Dorsolateral prefrontal cortex (tissue), 120 donors: ENCODE measurements at regions of chr2 and their contacts with region 1.

Region 1: GRCh38 chr2:28958689-28959088 is 22.4 kb upstream of the TOGARAM2 start:
- DNase-seq: peak; percentile 36 to 82 (median 72)
- H3K4me3 ChIP-seq: peak overlapping the region in 49 of 59 donors; percentile 4 to 56 (median 35)
- H3K27ac ChIP-seq: peak overlapping the region in 2 of 59 donors; percentile 5 to 48
- H3K27me3 ChIP-seq: no peaks in the 10 kb centered on the region
- CTCF ChIP-seq: peak; percentile 62 to 90 (median 83)

Region 2: DNA sequence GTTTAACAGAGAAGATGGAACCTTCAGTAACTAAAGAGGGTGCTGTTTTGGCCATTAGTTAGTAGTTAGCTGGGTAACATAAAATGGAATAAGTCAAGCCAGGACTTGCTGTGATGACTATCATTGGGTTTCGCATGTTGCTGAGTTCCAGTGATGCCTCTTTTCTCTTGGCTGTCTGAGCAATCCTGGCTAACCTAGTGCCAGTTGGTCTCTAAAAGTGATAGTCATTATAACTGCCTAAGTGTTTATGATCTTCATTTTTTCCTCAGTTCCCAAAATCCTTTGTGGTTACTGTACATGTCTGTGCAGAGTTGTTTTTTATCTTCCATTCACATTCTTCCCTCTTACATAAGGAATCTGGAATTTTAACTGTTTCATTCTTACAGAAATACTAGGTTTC is 30.8 kb before region 1 on chr2:
- intact Hi-C with region 1: no loop called
- DNase-seq: no peak
- H3K4me3 ChIP-seq: no peak overlapping the region
- H3K27ac ChIP-seq: no peak overlapping the region
- H3K27me3 ChIP-seq: no peaks in the 10 kb centered on the region
- CTCF ChIP-seq: no peak

Region 3: GRCh38 chr2:29075894-29076705 is 117.4 kb after region 1 on chr2:
- intact Hi-C with region 1: loop called in 1 of 2 experiments (anchors 5 kb)
- DNase-seq: peak in 9 of 10 donors; percentile 55 to 91 (median 79)
- H3K4me3 ChIP-seq: peak overlapping the region in 39 of 59 donors; percentile 0 to 54 (median 22)
- H3K27ac ChIP-seq: peak overlapping the region; percentile 68 to 99 (median 91)
- H3K27me3 ChIP-seq: no peaks in the 10 kb centered on the region
- CTCF ChIP-seq: peak in 19 of 56 donors; percentile 7 to 39 (median 24)

Region 4: DNA sequence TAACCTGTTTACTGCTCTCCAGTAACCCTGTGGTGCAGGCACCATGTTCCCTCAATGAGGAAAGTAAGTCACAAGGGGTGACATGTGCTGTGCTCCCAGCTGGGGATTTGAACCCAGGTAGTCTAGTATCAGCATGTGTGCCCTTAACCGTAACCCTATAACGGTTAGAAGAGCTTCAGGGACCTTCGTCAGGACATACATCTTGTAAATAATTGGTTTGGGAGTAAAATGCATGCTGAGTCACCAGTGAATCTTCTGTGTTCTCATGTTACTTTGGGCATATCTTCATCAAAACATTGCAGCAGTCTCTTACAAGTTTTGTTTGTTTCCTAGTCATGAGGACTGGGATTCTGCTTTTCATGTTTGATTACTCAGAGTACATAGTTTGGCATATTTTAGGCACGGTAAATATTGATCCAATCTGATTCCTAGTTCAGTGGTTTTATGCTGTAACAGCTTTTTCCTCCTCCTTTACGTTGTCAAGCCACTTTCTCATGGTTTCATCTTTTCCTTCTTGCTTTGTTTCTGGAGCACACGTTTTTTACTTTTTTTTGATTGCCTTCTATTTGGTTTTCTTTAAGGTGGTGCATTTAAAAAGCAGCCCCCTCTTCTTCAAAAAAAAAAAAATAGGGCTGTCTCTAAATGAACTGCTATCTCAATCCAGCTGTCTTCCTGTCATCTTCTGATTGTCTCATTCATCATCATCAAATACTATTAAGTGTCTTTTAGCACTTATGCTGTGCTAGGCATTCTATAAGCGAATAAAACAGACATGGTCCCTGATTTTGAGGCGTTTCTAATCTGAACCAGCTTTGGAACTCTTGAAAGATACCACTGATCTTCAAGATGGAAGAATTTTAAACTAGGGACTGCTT is 206.9 kb after region 1 on chr2:
- intact Hi-C with region 1: no loop called
- DNase-seq: no peak
- H3K4me3 ChIP-seq: no peak overlapping the region
- H3K27ac ChIP-seq: peak overlapping the region in 24 of 59 donors; percentile 4 to 58 (median 31)
- H3K27me3 ChIP-seq: no peaks in the 10 kb centered on the region
- CTCF ChIP-seq: no peak

Region 5: GRCh38 chr2:29196792-29197788 is 238.4 kb after region 1 on chr2:
- intact Hi-C with region 1: loop called (anchors 1 to 2 kb)
- DNase-seq: peak; percentile 30 to 80 (median 72)
- H3K4me3 ChIP-seq: no peak overlapping the region
- H3K27ac ChIP-seq: no peak overlapping the region
- H3K27me3 ChIP-seq: no peaks in the 10 kb centered on the region
- CTCF ChIP-seq: peak; percentile 51 to 97 (median 86)

Region 6: GRCh38 chr2:30026087-30027055 is 1067.7 kb after region 1 on chr2:
- intact Hi-C with region 1: loop called in 1 of 2 experiments (anchors 5 kb)
- DNase-seq: peak; percentile 34 to 82 (median 70)
- H3K4me3 ChIP-seq: peak overlapping the region in 13 of 59 donors; percentile 9 to 36 (median 24)
- H3K27ac ChIP-seq: peak overlapping the region in 2 of 59 donors; percentile 4 to 22
- H3K27me3 ChIP-seq: peaks cover 0 to 6% (median 0%) of the 10 kb centered on the region in 45 donors
- CTCF ChIP-seq: peak in 55 of 56 donors; percentile 39 to 87 (median 75)